HEK293 (cell line): ENCODE measurements at regions of chr10 and their contacts with region 1.

Region 1: DNA sequence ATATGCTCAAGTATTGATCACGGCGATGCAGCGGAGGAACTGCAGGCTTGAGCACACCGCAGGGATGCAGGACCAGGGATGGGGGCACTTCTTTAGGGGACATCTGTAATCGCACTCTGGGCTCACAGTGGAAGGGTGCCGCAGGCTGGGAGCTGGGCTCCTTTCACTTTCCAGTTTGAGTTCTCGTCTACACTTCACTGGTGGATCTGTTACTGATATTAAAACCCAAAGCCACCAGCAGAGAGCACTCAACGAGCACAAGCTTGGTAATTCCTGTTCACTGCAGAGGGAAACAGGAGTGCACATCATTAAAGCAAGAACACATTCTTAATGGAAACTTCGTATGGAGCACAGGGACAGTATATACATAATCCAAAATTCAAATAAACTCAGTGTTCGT is 91.3 kb downstream of the PARD3 start:
- H3K4me3 ChIP-seq: no peak overlapping the region
- H3K27ac ChIP-seq: no peak overlapping the region
- H3K4me1 ChIP-seq: peaks cover 10% of the 10 kb centered on the region
- CTCF ChIP-seq: no peak

Region 2: GRCh38 chr10:34705563-34705962 is 18.2 kb before region 1 on chr10:
- CTCF ChIA-PET with region 1: no interaction called
- POLR2A ChIA-PET with region 1: no interaction called
- H3K4me3 ChIP-seq: no peak overlapping the region
- H3K27ac ChIP-seq: no peak overlapping the region
- H3K4me1 ChIP-seq: peaks cover 26% of the 10 kb centered on the region
- CTCF ChIP-seq: no peak

Region 3: GRCh38 chr10:34739915-34740314 is 16.2 kb after region 1 on chr10:
- CTCF ChIA-PET with region 1: interaction called, 11 read pairs
- POLR2A ChIA-PET with region 1: no interaction called
- H3K4me3 ChIP-seq: peak overlapping the region; percentile 2; the same call in 1 of the 2 replicates
- H3K27ac ChIP-seq: no peak overlapping the region
- H3K4me1 ChIP-seq: peaks cover 14% of the 10 kb centered on the region; the same call in 1 of the 2 replicates
- CTCF ChIP-seq: no peak

Region 4: DNA sequence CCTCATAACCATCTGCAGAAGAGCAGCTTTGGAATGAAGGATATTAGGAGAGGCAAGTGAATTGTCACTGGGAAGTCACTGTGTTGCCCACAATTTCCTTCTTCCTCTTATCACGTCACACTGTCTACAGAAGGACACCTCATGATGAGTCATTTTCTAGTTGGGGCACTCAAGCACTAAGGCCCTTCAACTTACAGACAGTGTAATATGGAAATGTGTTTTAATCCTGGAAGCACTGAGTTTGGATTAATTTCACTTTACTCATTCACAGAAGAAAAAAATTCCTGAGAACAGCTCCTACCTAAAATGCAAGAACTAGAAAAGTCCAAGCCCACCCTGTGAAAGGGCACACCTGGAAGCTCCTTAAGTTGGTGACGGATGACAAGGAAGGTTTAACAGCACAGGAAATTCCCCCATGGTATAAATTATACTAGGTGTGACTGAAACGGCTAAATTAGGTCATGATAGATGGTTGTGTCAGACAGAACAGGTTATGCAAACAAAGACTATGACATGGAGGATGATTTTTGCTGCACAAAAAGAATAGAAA is 34.8 kb after region 1 on chr10:
- CTCF ChIA-PET with region 1: no interaction called
- POLR2A ChIA-PET with region 1: no interaction called
- H3K4me3 ChIP-seq: no peak overlapping the region
- H3K27ac ChIP-seq: no peak overlapping the region
- H3K4me1 ChIP-seq: peaks cover 5% of the 10 kb centered on the region; the same call in 1 of the 2 replicates
- CTCF ChIP-seq: no peak